Mammary epithelial cell (primary cell): ENCODE measurements at regions of chr12 and their contacts with region 1.

Region 1: DNA sequence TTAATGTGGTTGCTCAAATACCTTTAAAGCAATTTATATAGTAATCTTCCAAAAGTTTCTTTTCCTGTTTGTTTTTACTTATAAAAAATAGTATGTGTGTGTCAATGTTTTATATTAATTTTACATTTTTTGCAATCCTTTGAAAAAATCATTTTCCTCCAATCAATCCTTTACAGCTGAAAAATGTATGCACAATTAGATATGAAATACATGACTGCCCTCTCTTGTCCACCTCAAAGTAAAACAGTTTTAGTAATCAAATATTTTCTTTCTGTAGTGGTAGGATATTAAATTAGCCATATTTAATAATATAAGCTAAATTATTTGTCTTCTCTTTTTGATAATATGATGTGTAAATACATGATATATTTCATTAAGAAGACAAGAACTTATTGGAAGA is 269.9 kb downstream of the ADAMTS20 start:
- DNase-seq: no peak
- H3K4me3 ChIP-seq: no peak overlapping the region
- H3K27ac ChIP-seq: no peak overlapping the region
- H3K4me1 ChIP-seq: peaks cover 35% of the 10 kb centered on the region
- H3K27me3 ChIP-seq: no peaks in the 10 kb centered on the region
- CTCF ChIP-seq: peak; percentile 36 to 48

Region 2: GRCh38 chr12:42790761-42791151 is 491.4 kb before region 1 on chr12:
- CTCF ChIA-PET with region 1: no interaction called
- dilution Hi-C with region 1: no loop called
- in situ Hi-C with region 1: no loop called
- intact Hi-C with region 1: loop called (anchors 10 kb)
- DNase-seq: peak; percentile 52
- H3K4me3 ChIP-seq: no peak overlapping the region
- H3K27ac ChIP-seq: no peak overlapping the region
- H3K4me1 ChIP-seq: peaks cover 18% of the 10 kb centered on the region
- H3K27me3 ChIP-seq: no peaks in the 10 kb centered on the region
- CTCF ChIP-seq: no peak